ENCODE measurements at regions of chr11 and their contacts with region 1.

Region 1: GRCh38 chr11:59615637-59616395 is at the start of gene OSBP:
- DNase-seq: peak; percentile 99 to 100 (median 99)
- ATAC-seq: peak; percentile 96
- H3K4me3 ChIP-seq: peak within 1 kb of the TSS; percentile 81
- H3K27ac ChIP-seq: peak within 1 kb of the TSS; percentile 98
- H3K4me1 ChIP-seq: peaks cover 7% of the 10 kb centered on the region
- H3K27me3 ChIP-seq: no peaks in the 10 kb centered on the region
- total RNA-seq, gene OSBP: 33.9 to 40.6 (median 36.3) TPM

Region 2: GRCh38 chr11:59550368-59550841 is 65.4 kb before region 1 on chr11:
- intact Hi-C with region 1: loop called in 1 of 4 experiments (anchors 10 kb)
- DNase-seq: peak; percentile 82 to 87 (median 86)
- ATAC-seq: peak; percentile 84 to 90
- H3K4me3 ChIP-seq: peak overlapping the region; percentile 46
- H3K27ac ChIP-seq: peak overlapping the region; percentile 5
- H3K4me1 ChIP-seq: no peaks in the 10 kb centered on the region
- H3K27me3 ChIP-seq: no peaks in the 10 kb centered on the region

Region 3: GRCh38 chr11:59560702-59561469 is 54.9 kb before region 1 on chr11:
- intact Hi-C with region 1: loop called in 2 of 4 experiments (anchors 10 kb)
- DNase-seq: peak; percentile 85 to 94 (median 94)
- ATAC-seq: peak; percentile 90
- H3K4me3 ChIP-seq: peak overlapping the region; percentile 96
- H3K27ac ChIP-seq: peak overlapping the region; percentile 93
- H3K4me1 ChIP-seq: peaks cover 2% of the 10 kb centered on the region
- H3K27me3 ChIP-seq: no peaks in the 10 kb centered on the region

Measured in right cardiac atrium (tissue), 5 donors.